ENCODE measurements at regions of chr11 and their contacts with region 1.

Region 1: DNA sequence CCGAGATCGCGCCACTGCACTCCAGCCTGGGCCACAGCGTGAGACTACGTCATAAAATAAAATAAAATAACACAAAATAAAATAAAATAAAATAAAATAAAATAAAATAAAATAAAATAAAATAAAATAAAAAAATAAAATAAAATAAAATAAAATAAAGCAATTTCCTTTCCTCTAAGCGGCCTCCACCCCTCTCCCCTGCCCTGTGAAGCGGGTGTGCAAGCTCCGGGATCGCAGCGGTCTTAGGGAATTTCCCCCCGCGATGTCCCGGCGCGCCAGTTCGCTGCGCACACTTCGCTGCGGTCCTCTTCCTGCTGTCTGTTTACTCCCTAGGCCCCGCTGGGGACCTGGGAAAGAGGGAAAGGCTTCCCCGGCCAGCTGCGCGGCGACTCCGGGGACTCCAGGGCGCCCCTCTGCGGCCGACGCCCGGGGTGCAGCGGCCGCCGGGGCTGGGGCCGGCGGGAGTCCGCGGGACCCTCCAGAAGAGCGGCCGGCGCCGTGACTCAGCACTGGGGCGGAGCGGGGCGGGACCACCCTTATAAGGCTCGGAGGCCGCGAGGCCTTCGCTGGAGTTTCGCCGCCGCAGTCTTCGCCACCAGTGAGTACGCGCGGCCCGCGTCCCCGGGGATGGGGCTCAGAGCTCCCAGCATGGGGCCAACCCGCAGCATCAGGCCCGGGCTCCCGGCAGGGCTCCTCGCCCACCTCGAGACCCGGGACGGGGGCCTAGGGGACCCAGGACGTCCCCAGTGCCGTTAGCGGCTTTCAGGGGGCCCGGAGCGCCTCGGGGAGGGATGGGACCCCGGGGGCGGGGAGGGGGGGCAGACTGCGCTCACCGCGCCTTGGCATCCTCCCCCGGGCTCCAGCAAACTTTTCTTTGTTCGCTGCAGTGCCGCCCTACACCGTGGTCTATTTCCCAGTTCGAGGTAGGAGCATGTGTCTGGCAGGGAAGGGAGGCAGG is at the start of gene GSTP1:
- DNase-seq: peak; percentile 89
- H3K4me3 Mint-ChIP-seq: peak within 1 kb of the TSS; percentile 84
- H3K27ac Mint-ChIP-seq: peak within 1 kb of the TSS; percentile 96
- H3K4me1 Mint-ChIP-seq: peaks cover 49% of the 10 kb centered on the region
- H3K27me3 Mint-ChIP-seq: peaks cover 18% of the 10 kb centered on the region
- CTCF ChIP-seq: peak; percentile 58
- total RNA-seq, gene GSTP1: 1,641 and 1,733 TPM in 2 replicates

Region 2: DNA sequence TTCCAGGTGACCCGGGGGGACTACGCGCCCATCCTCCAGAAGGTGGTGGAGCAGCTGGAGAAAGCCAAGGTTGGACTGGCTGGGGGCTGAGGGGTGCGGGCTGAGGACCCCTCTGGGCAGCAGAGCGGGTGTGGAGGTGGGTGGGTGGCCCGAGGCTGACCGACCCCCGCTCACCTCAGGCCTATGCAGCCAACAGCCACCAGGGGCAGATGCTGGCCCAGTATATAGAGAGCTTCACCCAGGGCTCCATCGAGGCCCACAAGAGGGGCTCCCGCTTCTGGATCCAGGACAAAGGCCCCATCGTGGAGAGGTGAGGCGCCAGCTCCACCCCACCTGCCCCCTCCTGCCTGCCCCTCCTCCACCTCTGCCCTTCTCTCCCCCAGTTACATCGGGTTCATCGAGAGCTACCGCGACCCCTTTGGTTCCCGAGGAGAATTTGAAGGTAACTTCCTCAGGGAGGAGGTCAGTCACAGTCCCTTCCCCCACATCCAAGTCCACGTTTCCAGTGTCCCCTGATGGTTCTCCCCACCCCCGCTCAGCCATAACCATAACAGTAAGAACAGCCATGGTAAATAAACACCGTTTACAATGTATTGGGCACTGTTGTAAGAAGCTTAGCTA is 1092.1 kb before region 1 on chr11:
- CTCF ChIA-PET with region 1: no interaction called
- POLR2A ChIA-PET with region 1: no interaction called
- intact Hi-C with region 1: no loop called
- DNase-seq: no peak
- H3K4me3 Mint-ChIP-seq: no peak overlapping the region
- H3K27ac Mint-ChIP-seq: no peak overlapping the region
- H3K4me1 Mint-ChIP-seq: no peaks in the 10 kb centered on the region
- H3K27me3 Mint-ChIP-seq: no peaks in the 10 kb centered on the region
- CTCF ChIP-seq: peak; percentile 46

Region 3: GRCh38 chr11:67507864-67508485 is 75.6 kb before region 1 on chr11 and contains the start of gene CDK2AP2:
- CTCF ChIA-PET with region 1: no interaction called
- POLR2A ChIA-PET with region 1: interaction called, 8 read pairs
- intact Hi-C with region 1: loop called (anchors 5 kb)
- DNase-seq: peak; percentile 99
- H3K4me3 Mint-ChIP-seq: peak within 1 kb of the TSS; percentile 92
- H3K27ac Mint-ChIP-seq: peak within 1 kb of the TSS; percentile 89
- H3K4me1 Mint-ChIP-seq: peaks cover 20% of the 10 kb centered on the region
- H3K27me3 Mint-ChIP-seq: no peaks in the 10 kb centered on the region
- CTCF ChIP-seq: no peak
- total RNA-seq, gene CDK2AP2: 93.7 and 136 TPM in 2 replicates

Region 4: DNA sequence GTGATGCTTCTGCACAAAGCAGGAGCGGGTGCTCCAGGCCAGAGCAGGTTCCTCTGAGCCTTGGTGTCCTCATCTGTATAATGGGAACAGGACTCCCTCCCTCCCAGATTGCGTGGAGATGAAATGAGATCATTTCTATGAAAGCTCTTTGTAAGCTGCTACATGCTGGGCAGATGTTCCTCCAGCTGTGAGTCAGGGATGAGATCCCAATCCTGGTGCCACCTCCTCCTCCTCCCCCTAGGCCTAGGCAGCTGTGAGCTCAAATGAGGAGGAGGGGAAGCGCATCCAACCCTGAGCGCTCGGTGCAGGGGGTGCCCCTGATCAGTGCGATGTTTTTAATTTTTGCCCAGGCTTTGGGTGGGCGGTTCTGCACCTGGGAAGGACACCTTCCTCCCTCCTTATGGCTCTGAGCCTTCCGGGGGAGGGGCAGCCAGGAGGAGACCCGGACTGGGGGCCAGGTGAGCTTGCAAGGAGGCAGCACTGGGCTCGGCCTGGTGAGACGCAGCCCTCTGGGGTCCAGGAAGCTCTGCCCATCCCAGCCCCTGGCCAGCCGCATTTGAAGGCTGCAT is 53.2 kb before region 1 on chr11:
- CTCF ChIA-PET with region 1: no interaction called
- POLR2A ChIA-PET with region 1: no interaction called
- intact Hi-C with region 1: no loop called
- DNase-seq: no peak
- H3K4me3 Mint-ChIP-seq: no peak overlapping the region
- H3K27ac Mint-ChIP-seq: no peak overlapping the region
- H3K4me1 Mint-ChIP-seq: peaks cover 6% of the 10 kb centered on the region
- H3K27me3 Mint-ChIP-seq: no peaks in the 10 kb centered on the region
- CTCF ChIP-seq: no peak

Region 5: DNA sequence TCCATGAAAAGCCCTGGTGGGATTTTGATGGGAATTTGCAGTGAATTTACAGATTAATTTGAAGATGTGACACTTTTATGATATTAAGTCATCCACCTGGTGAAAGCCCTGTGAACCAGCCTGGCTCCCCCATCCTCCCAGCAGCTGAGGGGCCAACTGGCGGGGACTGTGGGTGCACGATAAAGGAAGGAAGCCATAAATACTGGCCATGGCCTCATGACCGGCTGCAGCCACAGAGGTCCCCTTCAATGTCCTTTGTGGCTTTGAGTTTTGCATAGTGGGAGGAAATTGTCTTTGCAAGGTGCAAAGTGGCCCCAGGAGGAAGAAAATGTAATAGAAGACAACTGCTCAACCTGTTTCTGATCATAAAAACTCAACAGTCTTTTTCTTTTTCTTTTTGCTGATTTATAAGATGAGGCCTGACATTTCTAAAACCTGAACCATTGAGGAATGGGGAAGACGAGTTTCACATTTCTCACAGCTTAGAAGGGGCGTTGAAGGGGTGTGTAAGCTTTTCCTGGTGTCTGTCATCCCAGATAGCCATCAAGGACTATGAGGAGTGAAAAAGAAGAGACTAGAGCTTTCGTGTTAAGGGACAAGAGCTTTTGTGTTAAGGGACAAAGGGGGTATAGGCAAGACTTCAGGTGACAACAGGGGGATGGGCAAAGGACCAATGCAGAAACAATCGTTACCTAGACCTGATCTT is 17.0 kb after region 1 on chr11:
- CTCF ChIA-PET with region 1: interaction called, 3 read pairs
- POLR2A ChIA-PET with region 1: interaction called, 70 read pairs
- intact Hi-C with region 1: no loop called
- DNase-seq: no peak
- H3K4me3 Mint-ChIP-seq: no peak overlapping the region
- H3K27ac Mint-ChIP-seq: no peak overlapping the region
- H3K4me1 Mint-ChIP-seq: no peaks in the 10 kb centered on the region
- H3K27me3 Mint-ChIP-seq: peaks cover 16% of the 10 kb centered on the region
- CTCF ChIP-seq: no peak

Region 6: GRCh38 chr11:67613960-67614715 is 30.6 kb after region 1 on chr11:
- CTCF ChIA-PET with region 1: interaction called, 3 read pairs
- POLR2A ChIA-PET with region 1: interaction called, 16 read pairs
- intact Hi-C with region 1: no loop called
- DNase-seq: peak; percentile 54
- H3K4me3 Mint-ChIP-seq: peak overlapping the region; percentile 53
- H3K27ac Mint-ChIP-seq: peak overlapping the region; percentile 79
- H3K4me1 Mint-ChIP-seq: peaks cover 4% of the 10 kb centered on the region
- H3K27me3 Mint-ChIP-seq: peaks cover 19% of the 10 kb centered on the region
- CTCF ChIP-seq: peak; percentile 90

Region 7: GRCh38 chr11:67656278-67656922 is 72.9 kb after region 1 on chr11:
- CTCF ChIA-PET with region 1: interaction called, 3 read pairs
- POLR2A ChIA-PET with region 1: interaction called, 16 read pairs
- intact Hi-C with region 1: no loop called
- DNase-seq: peak; percentile 39
- H3K4me3 Mint-ChIP-seq: no peak overlapping the region
- H3K27ac Mint-ChIP-seq: peak overlapping the region; percentile 64
- H3K4me1 Mint-ChIP-seq: no peaks in the 10 kb centered on the region
- H3K27me3 Mint-ChIP-seq: no peaks in the 10 kb centered on the region
- CTCF ChIP-seq: no peak

Region 8: DNA sequence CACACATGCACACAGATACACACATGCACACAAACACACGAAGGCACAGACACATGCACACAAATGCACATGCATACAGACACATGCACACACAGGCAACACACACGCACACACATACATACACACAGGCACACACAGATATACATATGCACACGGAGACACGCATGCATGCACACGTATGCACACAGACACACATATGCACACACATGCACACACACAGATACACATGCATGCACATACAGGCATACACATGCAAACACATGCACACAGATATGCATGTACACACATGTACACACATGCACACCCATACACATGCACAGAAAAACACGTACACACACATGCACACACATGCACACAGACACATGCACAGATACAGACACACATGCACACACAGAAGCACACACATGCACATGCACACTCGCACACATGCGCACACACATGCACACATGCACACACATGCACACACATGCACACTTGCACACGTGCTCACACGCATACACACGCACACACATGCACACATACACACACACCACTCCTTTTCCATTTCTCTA is 161.7 kb after region 1 on chr11:
- CTCF ChIA-PET with region 1: no interaction called
- POLR2A ChIA-PET with region 1: no interaction called
- intact Hi-C with region 1: no loop called
- DNase-seq: no peak
- H3K4me3 Mint-ChIP-seq: no peak overlapping the region
- H3K27ac Mint-ChIP-seq: no peak overlapping the region
- H3K4me1 Mint-ChIP-seq: no peaks in the 10 kb centered on the region
- H3K27me3 Mint-ChIP-seq: peaks cover 9% of the 10 kb centered on the region
- CTCF ChIP-seq: no peak

Measured in MCF 10A (cell line).